Left cardiac atrium (tissue), 4 donors: ENCODE measurements at regions of chr11 and their contacts with region 1.

Region 1: DNA sequence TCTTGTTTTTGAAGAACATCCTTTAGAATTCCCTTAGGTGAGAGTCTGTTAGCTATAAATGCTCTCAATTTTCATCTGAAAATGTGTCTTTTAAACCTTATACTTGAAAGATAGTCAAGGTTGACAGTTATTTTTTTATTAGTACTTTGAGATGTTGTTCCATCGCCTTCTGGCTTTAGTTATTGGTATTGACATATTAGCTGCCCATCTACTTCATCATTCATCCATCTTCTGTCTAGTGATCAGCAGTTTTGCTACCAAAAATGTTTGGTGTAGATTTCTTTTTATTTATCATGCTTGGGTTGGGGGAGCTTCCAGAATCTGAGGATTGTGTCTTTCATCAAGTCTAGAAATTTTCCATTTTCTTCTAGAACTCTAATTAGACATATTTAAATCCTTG is 3.3 kb upstream of the CD6 start:
- DNase-seq: no peak
- ATAC-seq: no peak

Region 2: DNA sequence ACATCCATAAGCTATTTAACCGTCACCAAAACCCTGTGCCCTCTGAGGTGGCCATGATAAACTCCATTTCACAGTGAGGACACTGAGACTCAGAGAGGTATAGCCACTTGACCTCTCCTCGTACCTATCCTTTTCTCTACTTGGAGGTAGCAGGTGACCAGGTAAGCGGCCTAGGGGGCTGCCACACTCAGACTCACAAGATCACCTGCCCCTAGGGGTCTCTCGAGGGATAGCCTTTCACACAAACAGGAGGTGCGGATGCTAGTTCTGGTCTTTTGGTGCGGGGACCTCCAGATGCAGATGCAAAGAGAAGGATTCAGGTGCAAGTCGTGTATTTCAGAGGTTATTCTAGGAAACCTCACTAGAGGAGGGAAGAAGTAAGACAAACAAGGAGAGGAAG is 229.1 kb before region 1 on chr11:
- intact Hi-C with region 1: no loop called
- DNase-seq: no peak
- ATAC-seq: no peak

Region 3: GRCh38 chr11:61129639-61130523 is 161.7 kb after region 1 on chr11:
- intact Hi-C with region 1: loop called in 1 of 2 experiments (anchors 2 kb)
- DNase-seq: peak; percentile 88
- ATAC-seq: peak; percentile 85 to 91

Region 4: DNA sequence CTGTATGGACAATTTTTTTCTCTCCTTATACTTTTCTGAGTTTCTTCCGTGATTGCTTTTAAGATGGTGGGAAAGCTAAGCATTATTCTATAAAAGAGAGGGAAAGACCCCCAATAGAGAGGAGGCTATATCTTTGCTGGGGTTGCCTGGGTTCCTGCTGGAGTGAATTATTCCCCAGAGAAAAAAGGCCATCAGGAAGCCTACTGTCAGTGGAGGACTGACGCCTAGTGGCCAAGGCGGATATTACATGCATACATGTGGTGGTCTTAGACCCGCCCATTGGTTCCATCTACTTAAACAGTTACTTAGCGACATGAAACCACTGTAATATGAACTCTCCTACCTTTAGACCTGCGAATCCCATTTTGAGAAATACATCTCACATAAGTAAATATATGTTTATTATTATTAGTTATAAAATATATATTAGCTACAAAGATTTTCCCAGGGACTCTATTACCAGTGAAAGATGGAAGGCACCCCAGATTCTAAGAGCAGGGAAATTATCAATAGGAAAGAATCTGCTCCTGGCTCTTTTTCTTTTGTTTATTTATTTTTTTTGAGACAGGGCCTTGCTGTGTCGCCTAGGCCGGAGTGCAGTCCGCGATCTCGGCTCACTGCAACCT is 219.4 kb after region 1 on chr11:
- intact Hi-C with region 1: loop called in 1 of 2 experiments (anchors 2 kb)
- DNase-seq: peak; percentile 81
- ATAC-seq: peak; percentile 72 to 77